HEK293 (cell line): ENCODE measurements at regions of chr16 and their contacts with region 1.

Region 1: DNA sequence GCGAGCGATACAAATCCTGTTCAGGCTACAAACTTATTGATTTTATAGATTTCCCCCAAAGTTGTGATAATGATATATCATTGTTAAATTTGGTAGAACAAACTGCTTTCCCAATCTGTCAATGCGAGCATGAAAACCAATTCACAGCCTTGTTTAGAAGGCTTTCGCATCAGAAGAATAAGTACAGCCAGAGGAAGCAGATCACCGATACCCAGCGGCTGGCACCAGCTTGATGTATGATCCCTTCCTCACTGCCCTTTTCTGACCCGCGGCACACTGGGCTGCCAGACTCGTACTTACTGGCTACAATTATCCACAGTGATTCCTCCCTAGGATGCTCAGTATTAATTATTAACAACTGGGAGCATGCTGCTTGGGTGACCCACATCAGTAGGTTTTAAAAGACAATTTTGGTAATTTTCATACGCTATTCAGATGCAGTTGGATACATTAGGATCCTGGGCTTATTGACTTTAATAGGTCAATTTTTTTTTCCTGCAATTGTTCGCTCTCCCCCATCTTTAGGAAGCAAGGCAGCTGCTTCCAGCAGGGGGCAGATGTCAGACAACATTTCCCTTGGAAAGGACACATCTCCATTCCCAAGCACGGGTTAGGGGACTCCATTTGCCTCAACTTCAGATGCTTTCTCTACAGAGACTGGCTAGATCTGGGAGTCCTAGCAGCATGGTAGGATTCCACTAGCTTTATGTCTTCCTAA is 582.7 kb upstream of the PSMD7 start:
- H3K4me3 ChIP-seq: no peak overlapping the region
- H3K27ac ChIP-seq: no peak overlapping the region
- H3K4me1 ChIP-seq: no peaks in the 10 kb centered on the region
- CTCF ChIP-seq: no peak

Region 2: GRCh38 chr16:73764321-73764720 is 50.4 kb after region 1 on chr16:
- CTCF ChIA-PET with region 1: no interaction called
- POLR2A ChIA-PET with region 1: no interaction called
- H3K4me3 ChIP-seq: no peak overlapping the region
- H3K27ac ChIP-seq: no peak overlapping the region
- H3K4me1 ChIP-seq: no peaks in the 10 kb centered on the region
- CTCF ChIP-seq: no peak

Region 3: DNA sequence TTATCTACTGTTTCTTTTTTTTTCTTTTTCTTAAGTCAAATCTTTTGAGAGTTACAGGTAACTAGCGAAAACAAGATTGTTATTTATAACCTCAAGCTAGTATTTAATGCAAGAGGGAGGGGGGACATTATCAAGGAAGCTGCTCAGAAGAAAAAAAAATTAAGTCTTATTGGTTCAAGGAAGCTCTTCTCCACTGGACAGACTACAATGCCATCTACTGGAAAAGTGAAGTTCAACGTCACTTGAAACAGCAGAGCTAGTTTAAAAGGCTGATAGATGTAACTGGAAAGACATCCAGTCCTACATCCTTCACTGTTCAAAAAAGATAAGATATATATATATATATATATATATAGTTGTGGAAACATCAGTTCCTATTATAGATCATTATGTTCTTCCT is 164.7 kb after region 1 on chr16:
- CTCF ChIA-PET with region 1: interaction called, 16 read pairs
- POLR2A ChIA-PET with region 1: no interaction called
- H3K4me3 ChIP-seq: no peak overlapping the region
- H3K27ac ChIP-seq: no peak overlapping the region
- H3K4me1 ChIP-seq: 0 out of 2 replicates have a peak, but pooled peaks cover under 1% of the 10 kb centered on the region
- CTCF ChIP-seq: 0 out of 2 replicates have a peak, but pooled peaks have one; percentile 36

Region 4: GRCh38 chr16:74034862-74035261 is 320.9 kb after region 1 on chr16:
- CTCF ChIA-PET with region 1: interaction called, 12 read pairs
- POLR2A ChIA-PET with region 1: no interaction called
- H3K4me3 ChIP-seq: no peak overlapping the region
- H3K27ac ChIP-seq: no peak overlapping the region
- H3K4me1 ChIP-seq: no peaks in the 10 kb centered on the region; the same call in 1 of the 2 replicates
- CTCF ChIP-seq: no peak